ENCODE measurements at regions of chr15 and their contacts with region 1.

Region 1: GRCh38 chr15:59997070-59997701 is 6.9 kb upstream of the FOXB1 start:
- DNase-seq: peak; percentile 70
- H3K4me3 Mint-ChIP-seq: peak overlapping the region; percentile 85
- H3K27ac Mint-ChIP-seq: peak overlapping the region; percentile 86
- H3K4me1 Mint-ChIP-seq: peaks cover 66% of the 10 kb centered on the region
- H3K27me3 Mint-ChIP-seq: peaks cover 89% of the 10 kb centered on the region

Region 2: GRCh38 chr15:59792359-59792758 is 204.8 kb before region 1 on chr15:
- intact Hi-C with region 1: loop called (anchors 10 kb)
- DNase-seq: no peak
- H3K4me3 Mint-ChIP-seq: no peak overlapping the region
- H3K27ac Mint-ChIP-seq: no peak overlapping the region
- H3K4me1 Mint-ChIP-seq: peaks cover 26% of the 10 kb centered on the region
- H3K27me3 Mint-ChIP-seq: peaks cover 37% of the 10 kb centered on the region

Region 3: DNA sequence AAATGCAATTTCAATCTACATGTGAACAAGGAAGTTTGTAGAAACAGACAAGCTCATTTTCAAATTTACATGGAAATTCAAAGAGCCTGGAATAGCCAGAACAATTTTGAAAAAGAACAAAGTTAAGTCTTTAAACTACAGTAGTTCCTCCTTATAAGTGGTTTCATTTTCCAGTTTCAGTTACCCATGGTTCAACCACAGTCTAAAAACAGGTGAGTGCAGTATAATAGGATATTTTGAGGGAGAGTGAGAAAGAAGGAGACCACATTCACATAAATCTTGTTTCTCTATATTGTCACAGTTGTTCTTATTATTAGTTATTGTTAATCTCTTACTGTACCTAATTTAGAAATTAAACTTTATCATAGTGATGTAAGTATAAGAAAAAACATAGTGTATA is 38.9 kb before region 1 on chr15:
- intact Hi-C with region 1: no loop called
- DNase-seq: no peak
- H3K4me3 Mint-ChIP-seq: no peak overlapping the region
- H3K27ac Mint-ChIP-seq: no peak overlapping the region
- H3K4me1 Mint-ChIP-seq: peaks cover 3% of the 10 kb centered on the region
- H3K27me3 Mint-ChIP-seq: peaks cover 4% of the 10 kb centered on the region

Region 4: GRCh38 chr15:60152386-60152785 is 155.2 kb after region 1 on chr15:
- intact Hi-C with region 1: no loop called
- DNase-seq: no peak
- H3K4me3 Mint-ChIP-seq: no peak overlapping the region
- H3K27ac Mint-ChIP-seq: no peak overlapping the region
- H3K4me1 Mint-ChIP-seq: peaks cover 40% of the 10 kb centered on the region
- H3K27me3 Mint-ChIP-seq: peaks cover 3% of the 10 kb centered on the region